ENCODE measurements at regions of chr4 and their contacts with region 1.

Region 1: GRCh38 chr4:152535903-152536544 is at the start of gene FBXW7:
- DNase-seq: peak; percentile 96
- H3K4me3 Mint-ChIP-seq: peak within 1 kb of the TSS; percentile 96
- H3K27ac Mint-ChIP-seq: peak within 1 kb of the TSS; percentile 92
- H3K4me1 Mint-ChIP-seq: peaks cover 30% of the 10 kb centered on the region
- H3K27me3 Mint-ChIP-seq: no peaks in the 10 kb centered on the region
- CTCF ChIP-seq: no peak
- total RNA-seq, gene FBXW7: 38.7 and 45.1 TPM in 2 replicates

Region 2: DNA sequence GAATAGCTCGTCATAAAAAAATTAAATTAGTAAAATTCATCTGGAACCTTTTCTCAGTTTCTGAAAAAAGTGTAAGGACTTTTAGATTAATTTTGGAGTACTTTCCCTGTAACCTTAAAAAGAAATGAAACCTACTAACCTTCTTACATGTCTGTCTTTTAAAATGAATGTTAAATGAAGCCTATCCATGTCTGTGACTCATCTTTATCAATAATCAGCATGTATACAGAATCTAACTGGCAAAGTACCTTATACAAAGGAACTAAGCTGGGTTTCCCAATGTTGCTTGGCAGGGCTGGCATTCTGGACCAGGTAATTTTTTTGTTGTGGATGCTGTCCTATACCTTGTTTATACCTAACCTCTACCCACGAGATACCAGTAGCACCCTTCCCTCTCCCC is 13.8 kb before region 1 on chr4:
- CTCF ChIA-PET with region 1: interaction called, 10 read pairs
- intact Hi-C with region 1: no loop called
- DNase-seq: no peak
- H3K4me3 Mint-ChIP-seq: no peak overlapping the region
- H3K27ac Mint-ChIP-seq: no peak overlapping the region
- H3K4me1 Mint-ChIP-seq: peaks cover 19% of the 10 kb centered on the region
- H3K27me3 Mint-ChIP-seq: no peaks in the 10 kb centered on the region
- CTCF ChIP-seq: no peak

Region 3: DNA sequence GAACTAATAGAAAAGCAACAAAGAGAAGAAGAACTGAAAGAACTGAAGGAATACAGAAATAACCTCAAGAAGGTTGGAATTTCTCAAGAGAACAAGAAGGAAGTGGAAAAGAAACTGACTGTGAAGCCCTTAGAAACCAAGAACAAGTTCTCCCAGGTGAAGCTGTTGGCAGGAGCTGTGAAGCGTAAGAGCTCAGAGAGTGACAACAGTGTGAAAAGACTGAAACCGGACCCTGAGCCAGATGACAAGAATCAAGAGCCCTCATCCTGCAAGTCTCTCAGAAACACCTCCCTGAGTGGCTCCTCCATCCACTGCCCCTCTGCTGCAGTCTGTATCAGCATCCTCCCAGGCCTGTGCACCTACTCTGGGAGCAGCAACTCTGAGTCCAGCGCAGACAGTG is 391.7 kb after region 1 on chr4:
- CTCF ChIA-PET with region 1: no interaction called
- intact Hi-C with region 1: no loop called
- DNase-seq: no peak
- H3K4me3 Mint-ChIP-seq: no peak overlapping the region
- H3K27ac Mint-ChIP-seq: no peak overlapping the region
- H3K4me1 Mint-ChIP-seq: no peaks in the 10 kb centered on the region
- H3K27me3 Mint-ChIP-seq: no peaks in the 10 kb centered on the region
- CTCF ChIP-seq: no peak